Dendritic cell treated with granulocyte-macrophage colony-stimulating factor and Interleukin-4, amounts not matched to agents 40 ng/mL and 50 ng/mL, for 4 days (primary cell): ENCODE measurements at regions of chrX and their contacts with region 1.

Region 1: GRCh38 chrX:136028251-136028984 is 43.2 kb downstream of the SLC9A6 start:
- H3K4me3 Mint-ChIP-seq: no peak overlapping the region
- H3K27ac Mint-ChIP-seq: no peak overlapping the region
- H3K4me1 Mint-ChIP-seq: no peaks in the 10 kb centered on the region
- H3K27me3 Mint-ChIP-seq: no peaks in the 10 kb centered on the region

Region 2: GRCh38 chrX:136162831-136163570 is 134.6 kb after region 1 on chrX:
- intact Hi-C with region 1: loop called (anchors 1 kb)
- H3K4me3 Mint-ChIP-seq: no peak overlapping the region
- H3K27ac Mint-ChIP-seq: no peak overlapping the region
- H3K4me1 Mint-ChIP-seq: no peaks in the 10 kb centered on the region
- H3K27me3 Mint-ChIP-seq: peaks cover 1% of the 10 kb centered on the region

Region 3: GRCh38 chrX:136268051-136269048 is 239.9 kb after region 1 on chrX:
- intact Hi-C with region 1: loop called (anchors 5 kb)
- H3K4me3 Mint-ChIP-seq: no peak overlapping the region
- H3K27ac Mint-ChIP-seq: no peak overlapping the region
- H3K4me1 Mint-ChIP-seq: no peaks in the 10 kb centered on the region
- H3K27me3 Mint-ChIP-seq: no peaks in the 10 kb centered on the region